ENCODE measurements at regions of chr2 and their contacts with region 1.

Region 1: GRCh38 chr2:197198890-197199289 is 111.7 kb downstream of the ANKRD44 start:
- DNase-seq: peak; percentile 98
- ATAC-seq: peak; percentile 98
- H3K4me3 ChIP-seq: peak overlapping the region; percentile 53; the same call in 1 of the 2 replicates
- H3K27ac ChIP-seq: peak overlapping the region; percentile 87
- H3K4me1 ChIP-seq: peaks cover 36% of the 10 kb centered on the region
- H3K27me3 ChIP-seq: no peaks in the 10 kb centered on the region
- CTCF ChIP-seq: no peak
- EP300 ChIP-seq: peak; percentile 71 to 84
- POLR2A ChIP-seq: peak; percentile 87
- RAD21 ChIP-seq: no peak; the same call in 1 of the 2 replicates

Region 2: GRCh38 chr2:196703695-196704094 is 495.2 kb before region 1 on chr2:
- CTCF ChIA-PET with region 1: no interaction called
- POLR2A ChIA-PET with region 1: no interaction called
- RAD21 ChIA-PET with region 1: no interaction called
- SMC1A ChIA-PET with region 1: no interaction called
- in situ Hi-C with region 1: no loop called
- intact Hi-C with region 1: no loop called
- DNase-seq: no peak
- ATAC-seq: no peak
- H3K4me3 ChIP-seq: no peak overlapping the region
- H3K27ac ChIP-seq: no peak overlapping the region
- H3K4me1 ChIP-seq: no peaks in the 10 kb centered on the region
- H3K27me3 ChIP-seq: no peaks in the 10 kb centered on the region
- CTCF ChIP-seq: no peak
- EP300 ChIP-seq: no peak
- POLR2A ChIP-seq: no peak
- RAD21 ChIP-seq: no peak

Region 3: GRCh38 chr2:196875414-196875813 is 323.5 kb before region 1 on chr2:
- CTCF ChIA-PET with region 1: no interaction called
- POLR2A ChIA-PET with region 1: no interaction called
- RAD21 ChIA-PET with region 1: no interaction called
- SMC1A ChIA-PET with region 1: no interaction called
- in situ Hi-C with region 1: no loop called
- intact Hi-C with region 1: no loop called
- DNase-seq: no peak
- ATAC-seq: no peak
- H3K4me3 ChIP-seq: no peak overlapping the region
- H3K27ac ChIP-seq: no peak overlapping the region
- H3K4me1 ChIP-seq: no peaks in the 10 kb centered on the region
- H3K27me3 ChIP-seq: no peaks in the 10 kb centered on the region
- CTCF ChIP-seq: no peak
- EP300 ChIP-seq: no peak
- POLR2A ChIP-seq: no peak
- RAD21 ChIP-seq: no peak

Region 4: GRCh38 chr2:197216361-197216979 is 17.6 kb after region 1 on chr2:
- CTCF ChIA-PET with region 1: interaction called, 18 read pairs
- POLR2A ChIA-PET with region 1: interaction called, 21 read pairs
- RAD21 ChIA-PET with region 1: interaction called, 127 read pairs
- SMC1A ChIA-PET with region 1: interaction called, 70 read pairs
- in situ Hi-C with region 1: no loop called
- intact Hi-C with region 1: loop called (anchors 2 kb)
- DNase-seq: peak; percentile 80
- ATAC-seq: peak; percentile 73
- H3K4me3 ChIP-seq: peak overlapping the region; percentile 34
- H3K27ac ChIP-seq: peak overlapping the region; percentile 82
- H3K4me1 ChIP-seq: peaks cover 70% of the 10 kb centered on the region
- H3K27me3 ChIP-seq: no peaks in the 10 kb centered on the region
- CTCF ChIP-seq: no peak
- EP300 ChIP-seq: peak; percentile 46 to 74; a peak in 3 of 4 replicates
- POLR2A ChIP-seq: 0 out of 2 replicates have a peak, but pooled peaks have one; percentile 23
- RAD21 ChIP-seq: 0 out of 2 replicates have a peak, but pooled peaks have one; percentile 16

Region 5: DNA sequence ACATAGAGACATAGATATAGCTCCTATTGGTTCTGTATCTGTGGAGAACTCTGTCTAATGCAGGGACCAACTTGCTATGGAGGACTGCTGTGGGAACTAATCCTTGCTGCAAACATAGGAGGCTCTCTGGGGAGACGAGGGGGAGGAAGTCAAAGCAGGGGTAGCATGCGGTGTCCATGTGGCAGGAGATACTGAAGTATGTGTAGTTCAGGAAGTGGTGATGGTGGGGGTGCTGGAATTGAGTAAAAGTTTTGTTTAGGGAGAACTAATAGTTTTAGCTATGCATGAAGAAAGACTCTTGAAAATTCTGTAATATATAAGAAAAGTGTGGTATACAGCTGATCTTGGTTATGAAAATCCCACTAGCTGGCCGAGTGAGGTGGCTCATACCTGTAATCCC is 49.7 kb after region 1 on chr2:
- CTCF ChIA-PET with region 1: interaction called, 4 read pairs
- POLR2A ChIA-PET with region 1: interaction called, 3 read pairs
- RAD21 ChIA-PET with region 1: interaction called, 13 read pairs
- SMC1A ChIA-PET with region 1: interaction called, 61 read pairs
- in situ Hi-C with region 1: no loop called
- intact Hi-C with region 1: no loop called
- DNase-seq: no peak
- ATAC-seq: peak; percentile 45
- H3K4me3 ChIP-seq: no peak overlapping the region
- H3K27ac ChIP-seq: peak overlapping the region; percentile 76
- H3K4me1 ChIP-seq: peaks cover 19% of the 10 kb centered on the region
- H3K27me3 ChIP-seq: no peaks in the 10 kb centered on the region
- CTCF ChIP-seq: no peak
- EP300 ChIP-seq: no peak
- POLR2A ChIP-seq: no peak
- RAD21 ChIP-seq: no peak

Region 6: DNA sequence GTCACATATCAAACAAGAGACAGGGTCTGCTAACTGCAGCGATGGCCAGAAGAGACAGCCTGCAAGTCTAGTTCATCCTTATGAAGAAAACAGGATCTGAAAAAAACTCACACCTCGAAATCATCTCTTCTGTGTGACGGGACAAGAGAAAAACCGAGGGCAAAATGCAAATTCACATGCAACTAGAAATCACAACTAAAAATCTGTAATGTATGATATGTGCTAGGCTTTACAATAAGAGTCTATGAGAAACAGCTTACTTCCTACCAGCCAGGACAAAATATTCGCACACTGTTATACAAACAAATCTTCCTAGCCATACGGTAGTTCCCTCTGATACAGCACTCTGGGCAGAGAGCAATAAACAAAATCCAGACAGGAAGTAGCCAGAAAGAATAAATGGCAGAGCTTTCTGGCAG is 62.9 kb after region 1 on chr2:
- CTCF ChIA-PET with region 1: interaction called, 3 read pairs
- POLR2A ChIA-PET with region 1: interaction called, 6 read pairs
- RAD21 ChIA-PET with region 1: interaction called, 65 read pairs
- SMC1A ChIA-PET with region 1: interaction called, 61 read pairs
- in situ Hi-C with region 1: no loop called
- intact Hi-C with region 1: no loop called
- DNase-seq: peak; percentile 91
- ATAC-seq: peak; percentile 67
- H3K4me3 ChIP-seq: peak overlapping the region; percentile 12; the same call in 1 of the 2 replicates
- H3K27ac ChIP-seq: peak overlapping the region; percentile 87
- H3K4me1 ChIP-seq: peaks cover 63% of the 10 kb centered on the region
- H3K27me3 ChIP-seq: no peaks in the 10 kb centered on the region
- CTCF ChIP-seq: no peak
- EP300 ChIP-seq: peak in 1 of 2 experiments; percentile 77; a peak in 3 of 4 replicates
- POLR2A ChIP-seq: peak; percentile 38
- RAD21 ChIP-seq: no peak

Region 7: DNA sequence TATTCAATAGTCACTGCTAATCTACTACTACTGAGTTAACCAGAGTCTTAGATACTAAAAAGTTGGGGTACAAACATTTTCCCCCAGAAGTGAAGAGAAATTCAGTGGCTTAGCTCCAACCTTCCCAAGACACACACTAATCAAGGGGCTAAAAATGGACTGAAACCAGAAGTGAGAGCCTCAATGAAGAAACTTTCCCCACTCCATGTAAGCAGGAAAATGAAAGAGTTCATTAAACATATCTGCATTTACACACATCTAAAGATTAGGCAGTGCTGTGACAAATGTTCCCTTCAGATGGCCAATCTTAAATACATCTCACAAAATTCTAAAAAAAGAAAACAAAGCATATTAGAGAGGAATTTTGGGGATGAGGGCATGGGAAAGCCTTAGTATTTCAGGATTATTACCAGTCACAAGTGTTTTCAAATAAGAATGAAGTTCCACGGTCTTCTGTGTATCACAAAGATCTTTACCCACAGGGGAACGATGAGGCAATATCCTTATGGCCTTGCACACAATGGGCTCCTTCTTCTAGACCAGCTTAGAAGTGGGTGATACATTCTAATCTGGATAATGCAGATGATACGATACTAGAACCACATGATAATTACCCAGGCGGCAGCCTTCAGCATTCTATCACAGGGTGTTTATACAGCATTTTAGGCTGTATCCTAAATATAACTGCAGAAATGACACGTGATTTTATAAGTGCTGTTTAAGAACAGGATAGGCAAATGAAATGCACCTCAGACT is 94.5 kb after region 1 on chr2:
- CTCF ChIA-PET with region 1: interaction called, 4 read pairs
- POLR2A ChIA-PET with region 1: interaction called, 12 read pairs
- RAD21 ChIA-PET with region 1: interaction called, 408 read pairs
- SMC1A ChIA-PET with region 1: interaction called, 433 read pairs
- in situ Hi-C with region 1: no loop called
- intact Hi-C with region 1: no loop called
- DNase-seq: no peak
- ATAC-seq: peak; percentile 69
- H3K4me3 ChIP-seq: peak overlapping the region; percentile 43
- H3K27ac ChIP-seq: peak overlapping the region; percentile 95
- H3K4me1 ChIP-seq: peaks cover 54% of the 10 kb centered on the region
- H3K27me3 ChIP-seq: no peaks in the 10 kb centered on the region
- CTCF ChIP-seq: no peak
- EP300 ChIP-seq: peak in 1 of 2 experiments; percentile 18; a peak in 2 of 4 replicates
- POLR2A ChIP-seq: no peak
- RAD21 ChIP-seq: no peak